ENCODE measurements at regions of chr5 and their contacts with region 1.

Region 1: DNA sequence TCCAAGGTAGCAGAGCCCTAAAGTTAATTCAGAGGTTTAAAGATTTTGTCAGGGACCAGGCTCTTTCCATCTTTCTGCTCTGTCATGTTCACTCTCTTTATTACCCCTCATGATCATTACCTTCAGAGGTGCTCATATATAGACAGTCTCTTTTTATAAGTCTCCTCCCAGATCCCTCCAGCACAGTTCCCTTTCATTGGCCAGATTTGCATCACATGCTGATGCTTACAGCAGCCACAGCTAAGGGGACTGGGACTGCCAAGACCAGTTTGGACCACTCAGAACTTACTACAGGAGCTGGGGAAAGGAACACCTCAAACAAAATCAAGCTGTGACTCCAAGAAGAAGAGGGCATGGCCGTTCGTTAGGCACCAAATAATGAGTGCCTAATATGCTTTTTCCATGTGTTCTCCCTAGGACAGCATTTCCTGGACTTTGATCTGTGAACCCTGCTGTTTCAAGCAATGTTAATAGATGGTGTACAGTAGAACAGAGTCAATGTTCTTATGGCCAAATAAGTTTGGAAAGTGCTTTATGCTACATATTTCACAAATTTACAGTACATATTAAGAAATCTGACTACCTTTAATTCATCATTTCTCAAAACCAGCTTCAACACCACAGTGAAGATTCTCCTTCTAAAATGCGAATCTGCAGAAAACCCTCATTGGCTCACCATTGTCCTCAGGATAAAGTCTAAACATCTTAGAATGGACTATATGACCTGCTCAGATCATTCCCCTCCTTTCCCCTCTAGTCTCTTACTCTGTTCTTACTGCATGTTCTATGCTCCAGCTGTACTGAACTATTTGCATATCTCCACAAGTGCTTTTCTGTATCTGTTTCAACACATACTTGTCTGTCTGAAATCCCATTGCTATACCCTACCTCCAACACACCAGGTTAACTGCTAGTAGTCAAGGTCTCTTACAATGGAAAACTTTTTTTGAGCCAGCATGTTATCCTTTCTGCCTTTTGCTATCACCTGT is 3.4 kb downstream of the C5orf58 start:
- DNase-seq: no peak
- H3K4me3 Mint-ChIP-seq: no peak overlapping the region
- H3K27ac Mint-ChIP-seq: no peak overlapping the region
- H3K4me1 Mint-ChIP-seq: peaks cover 12% of the 10 kb centered on the region
- H3K27me3 Mint-ChIP-seq: no peaks in the 10 kb centered on the region

Region 2: GRCh38 chr5:169803077-169803981 is 432.8 kb before region 1 on chr5:
- CTCF ChIA-PET with region 1: no interaction called
- intact Hi-C with region 1: no loop called
- DNase-seq: no peak
- H3K4me3 Mint-ChIP-seq: no peak overlapping the region
- H3K27ac Mint-ChIP-seq: peak overlapping the region; percentile 9
- H3K4me1 Mint-ChIP-seq: peaks cover 39% of the 10 kb centered on the region
- H3K27me3 Mint-ChIP-seq: no peaks in the 10 kb centered on the region

Region 3: GRCh38 chr5:170247363-170247762 is 11.2 kb after region 1 on chr5:
- CTCF ChIA-PET with region 1: no interaction called
- intact Hi-C with region 1: loop called (anchors 1 kb)
- DNase-seq: no peak
- H3K4me3 Mint-ChIP-seq: no peak overlapping the region
- H3K27ac Mint-ChIP-seq: peak overlapping the region; percentile 54
- H3K4me1 Mint-ChIP-seq: peaks cover 34% of the 10 kb centered on the region
- H3K27me3 Mint-ChIP-seq: no peaks in the 10 kb centered on the region

Measured in activated naive CD4-positive, alpha-beta T cell treated with anti-CD3 and anti-CD28 coated beads for 36 hours (primary cell).